ENCODE measurements at regions of chr12 and their contacts with region 1.

Region 1: DNA sequence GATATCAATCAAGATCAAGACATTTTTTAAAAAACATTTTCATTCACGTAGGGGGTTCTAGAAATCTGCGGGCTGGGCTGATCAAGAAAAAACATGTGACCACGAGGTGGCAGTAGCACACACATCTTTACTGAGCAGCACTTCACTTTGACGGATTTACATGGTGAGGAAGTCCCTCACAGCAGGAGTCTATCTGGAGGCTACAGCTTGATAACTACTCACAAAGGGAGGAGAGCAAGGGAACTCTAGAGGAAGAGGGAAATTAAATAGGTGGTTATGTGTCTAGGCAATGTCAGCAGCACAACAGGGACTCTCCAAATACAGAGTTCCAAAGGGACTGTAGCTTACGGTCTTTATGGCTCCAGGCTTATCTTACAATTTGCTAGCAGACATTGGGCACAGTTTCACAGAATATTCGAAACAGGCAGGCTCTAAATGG is 248.1 kb downstream of the DPY19L2 start:
- DNase-seq: peak; percentile 59 to 81 (median 66)
- ATAC-seq: peak; percentile 97
- H3K4me3 ChIP-seq: no peak overlapping the region
- H3K27ac ChIP-seq: no peak overlapping the region
- H3K4me1 ChIP-seq: no peaks in the 10 kb centered on the region; a peak in 1 of 5 replicates
- H3K27me3 ChIP-seq: no peaks in the 10 kb centered on the region
- CTCF ChIP-seq: peak; percentile 51 to 65 (median 63)
- EP300 ChIP-seq: no peak
- POLR2A ChIP-seq: no peak
- RAD21 ChIP-seq: peak; percentile 42 to 68

Region 2: GRCh38 chr12:63495974-63496373 is 75.7 kb after region 1 on chr12:
- CTCF ChIA-PET with region 1: no interaction called
- POLR2A ChIA-PET with region 1: no interaction called
- in situ Hi-C with region 1: no loop called
- intact Hi-C with region 1: no loop called
- DNase-seq: no peak
- ATAC-seq: no peak
- H3K4me3 ChIP-seq: no peak overlapping the region
- H3K27ac ChIP-seq: no peak overlapping the region
- H3K4me1 ChIP-seq: no peaks in the 10 kb centered on the region
- H3K27me3 ChIP-seq: no peaks in the 10 kb centered on the region
- CTCF ChIP-seq: no peak
- EP300 ChIP-seq: no peak
- POLR2A ChIP-seq: no peak
- RAD21 ChIP-seq: no peak

Region 3: GRCh38 chr12:63802012-63802608 is 381.9 kb after region 1 on chr12:
- CTCF ChIA-PET with region 1: interaction called, 4 read pairs
- POLR2A ChIA-PET with region 1: no interaction called
- in situ Hi-C with region 1: loop called (anchors 25 kb)
- intact Hi-C with region 1: loop called (anchors 2 kb)
- DNase-seq: peak in 2 of 4 experiments; percentile 9 to 14
- ATAC-seq: no peak
- H3K4me3 ChIP-seq: no peak overlapping the region
- H3K27ac ChIP-seq: no peak overlapping the region
- H3K4me1 ChIP-seq: no peaks in the 10 kb centered on the region
- H3K27me3 ChIP-seq: no peaks in the 10 kb centered on the region
- CTCF ChIP-seq: peak; percentile 32 to 62 (median 46); a peak in 4 of 6 replicates
- EP300 ChIP-seq: no peak
- POLR2A ChIP-seq: no peak
- RAD21 ChIP-seq: peak; percentile 61 to 63

Measured in K562 (cell line).